Endothelial cell of umbilical vein (primary cell): ENCODE measurements at regions of chr10 and their contacts with region 1.

Region 1: GRCh38 chr10:92822060-92822634 is 26.2 kb upstream of the EXOC6 start:
- DNase-seq: peak; percentile 97
- H3K4me3 ChIP-seq: no peak overlapping the region
- H3K27ac ChIP-seq: peak overlapping the region; percentile 97
- H3K4me1 ChIP-seq: peaks cover 55% of the 10 kb centered on the region
- H3K27me3 ChIP-seq: no peaks in the 10 kb centered on the region
- CTCF ChIP-seq: no peak
- POLR2A ChIP-seq: peak; percentile 60

Region 2: GRCh38 chr10:92757066-92757710 is 65.0 kb before region 1 on chr10:
- CTCF ChIA-PET with region 1: interaction called, 12 read pairs
- POLR2A ChIA-PET with region 1: interaction called, 6 read pairs
- dilution Hi-C with region 1: no loop called
- intact Hi-C with region 1: loop called (anchors 1 kb)
- DNase-seq: peak; percentile 93
- H3K4me3 ChIP-seq: peak overlapping the region in 1 of 3 experiments; percentile 41
- H3K27ac ChIP-seq: peak overlapping the region; percentile 98
- H3K4me1 ChIP-seq: peaks cover 46% of the 10 kb centered on the region
- H3K27me3 ChIP-seq: no peaks in the 10 kb centered on the region
- CTCF ChIP-seq: peak in 1 of 2 donors; percentile 18
- POLR2A ChIP-seq: no peak

Region 3: GRCh38 chr10:92848441-92849233 is 26.5 kb after region 1 on chr10 and contains the start of gene EXOC6:
- CTCF ChIA-PET with region 1: interaction called, 43 read pairs
- POLR2A ChIA-PET with region 1: interaction called, 4 read pairs
- dilution Hi-C with region 1: no loop called
- intact Hi-C with region 1: no loop called
- DNase-seq: peak; percentile 86
- H3K4me3 ChIP-seq: peak within 1 kb of the TSS; percentile 77 to 85 (median 83)
- H3K27ac ChIP-seq: no peak within 1 kb of the TSS
- H3K4me1 ChIP-seq: peaks cover 28% of the 10 kb centered on the region
- H3K27me3 ChIP-seq: no peaks in the 10 kb centered on the region
- CTCF ChIP-seq: no peak
- POLR2A ChIP-seq: peak; percentile 77
- total RNA-seq, gene EXOC6: 103 and 108 TPM in 2 replicates

Region 4: DNA sequence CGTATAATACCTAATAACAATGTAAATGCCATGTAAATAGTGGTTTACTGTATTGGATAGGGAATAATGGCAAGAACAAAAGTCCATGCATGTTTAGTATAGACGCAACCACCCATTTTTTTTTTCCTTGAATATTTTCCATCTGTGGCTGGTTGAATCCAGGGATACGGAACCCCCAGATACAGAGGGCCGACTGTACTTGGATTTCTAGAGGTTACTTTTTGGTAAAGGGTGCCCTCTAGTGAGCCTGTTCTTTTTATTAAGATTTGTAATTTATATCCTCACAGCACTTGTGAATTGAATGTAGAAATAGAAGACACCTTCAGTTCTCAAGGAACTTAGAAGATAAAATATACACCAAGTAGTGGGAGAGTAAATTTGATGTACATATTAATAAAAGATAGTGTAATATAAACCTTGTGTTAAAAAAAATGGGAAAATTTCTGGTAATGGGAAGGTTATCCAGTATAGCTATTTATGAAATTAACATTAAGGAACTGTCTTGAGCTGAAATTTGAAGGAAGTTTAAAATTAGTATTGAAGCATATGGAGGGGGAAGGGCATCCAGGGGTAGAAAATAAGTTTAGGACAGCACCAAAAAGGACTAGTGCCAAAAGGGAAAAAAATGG is 58.2 kb after region 1 on chr10:
- CTCF ChIA-PET with region 1: interaction called, 15 read pairs
- POLR2A ChIA-PET with region 1: no interaction called
- dilution Hi-C with region 1: no loop called
- intact Hi-C with region 1: loop called (anchors 1 kb)
- DNase-seq: peak; percentile 74
- H3K4me3 ChIP-seq: no peak overlapping the region
- H3K27ac ChIP-seq: no peak overlapping the region
- H3K4me1 ChIP-seq: peaks cover 28% of the 10 kb centered on the region
- H3K27me3 ChIP-seq: no peaks in the 10 kb centered on the region
- CTCF ChIP-seq: peak; percentile 7 to 18
- POLR2A ChIP-seq: no peak

Region 5: GRCh38 chr10:92901819-92902251 is 79.7 kb after region 1 on chr10:
- CTCF ChIA-PET with region 1: no interaction called
- POLR2A ChIA-PET with region 1: no interaction called
- dilution Hi-C with region 1: no loop called
- intact Hi-C with region 1: no loop called
- DNase-seq: no peak
- H3K4me3 ChIP-seq: no peak overlapping the region
- H3K27ac ChIP-seq: no peak overlapping the region
- H3K4me1 ChIP-seq: no peaks in the 10 kb centered on the region
- H3K27me3 ChIP-seq: no peaks in the 10 kb centered on the region
- CTCF ChIP-seq: no peak
- POLR2A ChIP-seq: no peak